B cell (primary cell): ENCODE measurements at regions of chr11 and their contacts with region 1.

Region 1: GRCh38 chr11:107858217-107859070 is at the start of gene SLC35F2:
- DNase-seq: peak; percentile 88
- ATAC-seq: peak; percentile 93
- H3K4me3 ChIP-seq: peak within 1 kb of the TSS; percentile 63 to 83 (median 78)
- H3K4me3 Mint-ChIP-seq: peak within 1 kb of the TSS; percentile 99
- H3K27ac ChIP-seq: peak within 1 kb of the TSS; percentile 61 to 77
- H3K27ac Mint-ChIP-seq: peak within 1 kb of the TSS; percentile 94
- H3K4me1 ChIP-seq: peaks cover 14 to 26% of the 10 kb centered on the region in 2 donors
- H3K4me1 Mint-ChIP-seq: peaks cover 29% of the 10 kb centered on the region
- H3K27me3 ChIP-seq: no peaks in the 10 kb centered on the region
- H3K27me3 Mint-ChIP-seq: no peaks in the 10 kb centered on the region
- CTCF ChIP-seq: peak; percentile 34
- total RNA-seq, gene SLC35F2: 9.4 and 10.9 TPM in 2 replicates

Region 2: DNA sequence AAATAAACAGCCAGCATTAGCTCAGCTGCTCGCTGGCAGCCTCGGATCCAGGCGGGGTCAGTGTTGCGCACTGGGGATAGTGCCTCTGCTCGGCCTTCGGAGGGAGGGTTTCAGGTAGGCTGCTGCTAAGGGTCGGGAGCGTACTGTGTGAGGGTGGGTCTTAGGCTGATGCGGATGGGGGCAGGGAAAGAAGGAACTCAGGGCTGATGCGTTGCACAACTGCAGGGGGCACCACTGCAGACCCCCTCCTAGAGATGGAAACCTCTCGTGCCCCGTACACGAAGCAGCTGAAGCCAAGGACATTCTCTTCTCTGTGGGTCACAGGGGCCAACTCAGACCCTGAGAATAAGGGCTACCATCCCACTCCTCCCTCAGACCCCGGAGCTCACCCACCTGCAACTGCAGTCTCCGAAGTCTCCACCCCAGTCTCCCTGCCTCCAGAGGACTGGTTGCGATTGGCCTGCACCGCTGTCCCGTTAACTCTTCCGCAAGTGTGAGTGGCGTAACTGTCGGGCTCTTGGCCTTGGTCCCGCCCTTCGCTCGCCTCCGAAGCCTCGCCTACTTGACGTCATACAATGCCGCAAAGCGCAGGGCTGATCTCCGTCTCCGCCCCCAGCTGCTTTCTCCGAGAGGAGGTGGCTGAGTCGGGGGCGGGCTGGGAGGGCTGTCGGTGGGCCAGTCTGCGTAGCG is 1781.4 kb before region 1 on chr11 and contains the start of gene KBTBD3:
- CTCF ChIA-PET with region 1: no interaction called
- POLR2A ChIA-PET with region 1: no interaction called
- intact Hi-C with region 1: loop called (anchors 2 kb)
- DNase-seq: peak; percentile 99
- ATAC-seq: peak; percentile 91
- H3K4me3 ChIP-seq: peak within 1 kb of the TSS; percentile 72 to 96 (median 77)
- H3K4me3 Mint-ChIP-seq: peak within 1 kb of the TSS; percentile 100
- H3K27ac ChIP-seq: peak within 1 kb of the TSS; percentile 92 to 93
- H3K27ac Mint-ChIP-seq: peak within 1 kb of the TSS; percentile 99
- H3K4me1 ChIP-seq: peaks cover 12 to 23% of the 10 kb centered on the region in 2 donors
- H3K4me1 Mint-ChIP-seq: peaks cover 48% of the 10 kb centered on the region
- H3K27me3 ChIP-seq: no peaks in the 10 kb centered on the region
- H3K27me3 Mint-ChIP-seq: no peaks in the 10 kb centered on the region
- CTCF ChIP-seq: peak; percentile 73
- total RNA-seq, gene KBTBD3: 15.5 and 18.3 TPM in 2 replicates

Region 3: GRCh38 chr11:107457558-107458271 is 400.7 kb before region 1 on chr11 and contains the start of gene CWF19L2:
- CTCF ChIA-PET with region 1: no interaction called
- POLR2A ChIA-PET with region 1: no interaction called
- intact Hi-C with region 1: loop called (anchors 5 kb)
- DNase-seq: peak; percentile 94
- ATAC-seq: peak; percentile 96
- H3K4me3 ChIP-seq: peak within 1 kb of the TSS; percentile 65 to 99 (median 94)
- H3K4me3 Mint-ChIP-seq: peak within 1 kb of the TSS; percentile 94
- H3K27ac ChIP-seq: peak within 1 kb of the TSS; percentile 64 to 88
- H3K27ac Mint-ChIP-seq: peak within 1 kb of the TSS; percentile 93
- H3K4me1 ChIP-seq: peaks cover 12 to 14% of the 10 kb centered on the region in 2 donors
- H3K4me1 Mint-ChIP-seq: peaks cover 27% of the 10 kb centered on the region
- H3K27me3 ChIP-seq: no peaks in the 10 kb centered on the region
- H3K27me3 Mint-ChIP-seq: peaks cover 5% of the 10 kb centered on the region
- CTCF ChIP-seq: no peak
- total RNA-seq, gene CWF19L2: 44.3 and 44.6 TPM in 2 replicates

Region 4: DNA sequence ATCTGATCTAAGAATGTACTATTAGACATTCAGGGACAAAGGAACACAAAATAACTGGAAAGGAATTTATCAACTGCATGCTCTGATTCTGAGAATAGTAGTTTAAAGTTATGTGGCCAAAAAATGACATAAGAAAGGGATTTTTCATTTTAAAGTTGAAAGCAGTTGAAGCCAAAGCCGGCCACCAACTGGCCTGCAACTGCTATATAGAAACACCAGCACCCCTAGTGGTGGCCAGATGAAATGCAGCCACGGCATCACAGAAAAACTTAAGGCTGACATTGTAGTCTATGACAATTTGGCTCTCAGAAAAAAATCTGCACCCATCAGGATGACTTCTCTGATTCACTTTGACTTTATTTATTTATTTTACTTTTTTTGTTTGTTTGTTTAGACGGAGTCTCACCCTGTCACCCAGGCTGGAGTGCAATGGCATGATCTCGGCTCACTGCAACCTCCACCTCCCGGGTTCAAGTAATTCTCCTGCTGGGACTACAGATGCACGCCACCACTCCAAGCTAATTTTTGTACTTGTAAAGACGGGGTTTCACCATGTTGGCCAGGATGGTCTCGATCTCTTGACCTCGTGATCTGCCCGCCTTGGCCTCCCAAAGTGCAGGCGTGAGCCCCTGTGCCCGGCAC is 59.1 kb before region 1 on chr11:
- CTCF ChIA-PET with region 1: no interaction called
- POLR2A ChIA-PET with region 1: no interaction called
- intact Hi-C with region 1: loop called (anchors 1 kb)
- DNase-seq: peak; percentile 62
- ATAC-seq: peak; percentile 81
- H3K4me3 ChIP-seq: no peak overlapping the region
- H3K4me3 Mint-ChIP-seq: no peak overlapping the region
- H3K27ac ChIP-seq: no peak overlapping the region
- H3K27ac Mint-ChIP-seq: no peak overlapping the region
- H3K4me1 ChIP-seq: no peaks in the 10 kb centered on the region
- H3K4me1 Mint-ChIP-seq: no peaks in the 10 kb centered on the region
- H3K27me3 ChIP-seq: no peaks in the 10 kb centered on the region
- H3K27me3 Mint-ChIP-seq: no peaks in the 10 kb centered on the region
- CTCF ChIP-seq: peak; percentile 98

Region 5: DNA sequence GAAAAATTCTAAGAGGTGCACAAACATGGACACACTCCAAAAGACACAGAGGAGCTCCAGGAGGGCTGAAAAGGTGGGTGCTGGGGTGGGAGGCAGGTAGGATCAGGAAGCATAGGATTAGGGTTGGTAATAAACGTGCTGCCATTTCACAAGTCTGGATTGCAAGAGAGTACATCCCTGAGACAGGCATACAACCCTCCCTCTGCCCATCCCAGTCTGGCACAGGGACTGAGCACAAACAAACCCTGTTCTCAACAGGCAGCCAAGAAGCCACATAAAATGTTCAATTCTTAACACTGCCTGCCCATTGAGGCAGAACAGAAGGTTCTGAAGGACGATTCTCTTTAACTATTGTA is 18.3 kb before region 1 on chr11:
- CTCF ChIA-PET with region 1: no interaction called
- POLR2A ChIA-PET with region 1: interaction called, 3 read pairs
- intact Hi-C with region 1: loop called (anchors 2 kb)
- DNase-seq: no peak
- ATAC-seq: no peak
- H3K4me3 ChIP-seq: no peak overlapping the region
- H3K4me3 Mint-ChIP-seq: no peak overlapping the region
- H3K27ac ChIP-seq: no peak overlapping the region
- H3K27ac Mint-ChIP-seq: peak overlapping the region; percentile 28
- H3K4me1 ChIP-seq: peaks cover 13 to 18% of the 10 kb centered on the region in 2 donors
- H3K4me1 Mint-ChIP-seq: peaks cover 22% of the 10 kb centered on the region
- H3K27me3 ChIP-seq: no peaks in the 10 kb centered on the region
- H3K27me3 Mint-ChIP-seq: no peaks in the 10 kb centered on the region
- CTCF ChIP-seq: no peak

Region 6: DNA sequence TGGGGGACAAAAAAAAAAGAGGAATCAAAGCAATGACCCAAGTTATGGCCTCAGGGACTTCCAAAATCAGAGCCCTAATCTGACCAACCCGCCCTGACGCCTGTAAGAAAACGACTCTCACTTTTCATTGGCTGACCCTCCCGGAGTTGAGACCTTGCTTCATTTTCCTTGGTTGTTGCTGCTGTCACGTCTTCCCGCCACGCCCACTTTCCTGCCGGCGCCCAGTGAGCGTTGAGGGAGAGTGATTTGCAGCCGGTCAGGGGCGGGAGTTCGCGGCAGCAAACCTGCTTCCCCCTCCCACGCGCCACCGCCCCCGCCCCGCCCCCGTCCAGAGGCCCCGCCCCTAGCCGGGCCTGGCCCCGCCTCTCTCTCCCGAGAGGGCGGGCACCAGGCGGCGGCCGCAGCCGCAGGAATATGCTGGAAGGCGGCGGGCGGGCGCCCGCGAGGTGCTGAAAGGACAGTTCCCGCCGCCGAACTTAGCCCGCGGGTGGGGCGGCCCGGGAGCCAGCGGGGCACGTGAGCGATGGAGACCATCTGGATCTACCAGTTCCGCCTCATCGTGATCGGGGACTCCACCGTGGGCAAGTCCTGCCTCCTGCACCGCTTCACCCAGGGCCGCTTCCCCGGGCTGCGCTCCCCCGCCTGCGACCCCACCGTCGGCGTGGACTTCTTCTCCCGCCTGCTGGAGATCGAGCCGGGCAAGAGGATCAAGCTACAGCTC is 69.8 kb after region 1 on chr11 and contains the start of gene RAB39A:
- CTCF ChIA-PET with region 1: no interaction called
- POLR2A ChIA-PET with region 1: no interaction called
- intact Hi-C with region 1: loop called (anchors 1 kb)
- DNase-seq: peak; percentile 94
- ATAC-seq: peak; percentile 85
- H3K4me3 ChIP-seq: peak within 1 kb of the TSS; percentile 44 to 89 (median 74)
- H3K4me3 Mint-ChIP-seq: peak within 1 kb of the TSS; percentile 88
- H3K27ac ChIP-seq: peak within 1 kb of the TSS; percentile 37 to 52
- H3K27ac Mint-ChIP-seq: peak within 1 kb of the TSS; percentile 88
- H3K4me1 ChIP-seq: peaks cover 16 to 19% of the 10 kb centered on the region in 2 donors
- H3K4me1 Mint-ChIP-seq: peaks cover 30% of the 10 kb centered on the region
- H3K27me3 ChIP-seq: peaks cover 0 to 3% (median 0%) of the 10 kb centered on the region in 4 experiments
- H3K27me3 Mint-ChIP-seq: peaks cover 5% of the 10 kb centered on the region
- CTCF ChIP-seq: no peak
- total RNA-seq, gene RAB39A: 2.4 TPM in 2 replicates